ENCODE measurements at regions of chr6 and their contacts with region 1.

Region 1: GRCh38 chr6:90285611-90286381 is 10.8 kb downstream of the BACH2 start:
- DNase-seq: peak; percentile 87
- H3K4me3 Mint-ChIP-seq: peak overlapping the region; percentile 87
- H3K27ac Mint-ChIP-seq: peak overlapping the region; percentile 94
- H3K4me1 Mint-ChIP-seq: peaks cover 81% of the 10 kb centered on the region
- H3K27me3 Mint-ChIP-seq: no peaks in the 10 kb centered on the region

Region 2: DNA sequence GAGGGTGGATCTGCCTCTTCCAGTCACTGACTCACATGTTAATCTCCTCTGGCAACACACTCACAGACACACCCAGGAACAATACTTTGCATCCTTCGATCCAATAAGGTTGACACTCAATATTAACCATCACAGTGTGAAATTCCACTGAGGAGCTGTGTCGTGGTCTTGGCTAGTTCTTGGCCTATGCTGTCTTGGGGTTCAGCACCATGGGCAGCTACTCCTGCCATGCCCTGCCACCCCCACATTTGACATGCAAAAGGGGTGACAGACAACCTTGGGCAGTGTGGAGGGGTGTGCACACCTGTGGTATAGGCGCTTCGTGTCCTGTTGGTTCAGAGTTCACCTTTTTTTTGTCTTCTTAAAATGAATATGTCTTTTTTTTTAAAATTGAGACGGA is 827.1 kb before region 1 on chr6:
- intact Hi-C with region 1: no loop called
- DNase-seq: no peak
- H3K4me3 Mint-ChIP-seq: no peak overlapping the region
- H3K27ac Mint-ChIP-seq: no peak overlapping the region
- H3K4me1 Mint-ChIP-seq: no peaks in the 10 kb centered on the region
- H3K27me3 Mint-ChIP-seq: no peaks in the 10 kb centered on the region

Region 3: GRCh38 chr6:89940225-89941027 is 345.4 kb before region 1 on chr6:
- intact Hi-C with region 1: loop called (anchors 1 kb)
- DNase-seq: peak; percentile 91
- H3K4me3 Mint-ChIP-seq: no peak overlapping the region
- H3K27ac Mint-ChIP-seq: peak overlapping the region; percentile 41
- H3K4me1 Mint-ChIP-seq: peaks cover 34% of the 10 kb centered on the region
- H3K27me3 Mint-ChIP-seq: no peaks in the 10 kb centered on the region

Region 4: GRCh38 chr6:90144396-90144795 is 141.4 kb before region 1 on chr6:
- intact Hi-C with region 1: loop called (anchors 1 kb)
- DNase-seq: no peak
- H3K4me3 Mint-ChIP-seq: peak overlapping the region; percentile 59
- H3K27ac Mint-ChIP-seq: peak overlapping the region; percentile 92
- H3K4me1 Mint-ChIP-seq: peaks cover 54% of the 10 kb centered on the region
- H3K27me3 Mint-ChIP-seq: no peaks in the 10 kb centered on the region

Region 5: DNA sequence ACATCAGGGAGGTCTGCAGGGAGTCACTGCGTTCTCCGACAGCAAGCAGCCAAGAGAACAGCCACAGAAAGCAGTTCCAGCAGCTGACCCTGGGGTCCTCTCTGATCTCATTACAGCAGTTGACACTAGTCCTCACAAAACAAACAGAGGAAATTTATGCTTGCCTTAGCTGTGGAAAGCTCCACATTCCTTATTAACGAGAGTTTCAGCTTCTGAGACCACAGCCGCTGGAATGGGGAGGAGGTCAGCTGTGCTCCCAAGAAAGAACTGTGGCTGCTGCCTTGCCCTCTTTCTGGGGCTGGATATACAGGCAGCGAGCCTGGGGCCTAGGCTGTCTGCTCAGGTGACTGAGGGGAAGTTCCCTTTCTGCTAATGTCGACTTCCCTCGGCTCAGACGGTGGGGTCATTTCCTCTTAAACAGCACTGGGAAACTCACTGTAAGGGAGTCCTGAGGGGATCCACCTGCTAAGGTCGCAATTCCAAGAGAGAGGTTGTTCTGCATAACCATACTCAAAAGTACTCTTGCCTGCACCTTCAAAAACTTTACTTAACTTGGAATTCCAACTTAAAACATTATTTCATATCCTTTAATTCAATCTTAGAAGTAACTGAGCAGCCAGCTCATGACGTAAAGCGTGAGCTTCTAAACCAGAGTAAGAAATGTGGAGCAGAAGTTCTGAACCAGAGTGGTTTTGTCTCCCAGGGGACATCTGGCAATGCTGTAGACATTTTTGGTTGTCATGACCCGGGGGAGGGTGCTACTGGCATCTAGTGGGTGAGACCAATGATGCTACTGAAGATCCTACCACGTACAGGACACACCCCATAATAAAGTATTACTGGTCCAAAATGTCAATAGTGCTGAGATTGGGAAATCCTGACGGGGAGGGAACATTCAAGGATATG is 69.5 kb before region 1 on chr6:
- intact Hi-C with region 1: loop called (anchors 1 kb)
- DNase-seq: peak; percentile 79
- H3K4me3 Mint-ChIP-seq: peak overlapping the region; percentile 48
- H3K27ac Mint-ChIP-seq: no peak overlapping the region
- H3K4me1 Mint-ChIP-seq: peaks cover 40% of the 10 kb centered on the region
- H3K27me3 Mint-ChIP-seq: no peaks in the 10 kb centered on the region

Region 6: GRCh38 chr6:90274451-90275030 is 11.3 kb before region 1 on chr6:
- intact Hi-C with region 1: loop called (anchors 1 kb)
- DNase-seq: peak; percentile 94
- H3K4me3 Mint-ChIP-seq: peak overlapping the region; percentile 76
- H3K27ac Mint-ChIP-seq: peak overlapping the region; percentile 96
- H3K4me1 Mint-ChIP-seq: peaks cover 79% of the 10 kb centered on the region
- H3K27me3 Mint-ChIP-seq: no peaks in the 10 kb centered on the region

Region 7: GRCh38 chr6:90425161-90425641 is 139.4 kb after region 1 on chr6:
- intact Hi-C with region 1: loop called (anchors 1 kb)
- DNase-seq: peak; percentile 78
- H3K4me3 Mint-ChIP-seq: peak overlapping the region; percentile 69
- H3K27ac Mint-ChIP-seq: peak overlapping the region; percentile 91
- H3K4me1 Mint-ChIP-seq: peaks cover 24% of the 10 kb centered on the region
- H3K27me3 Mint-ChIP-seq: no peaks in the 10 kb centered on the region

Region 8: DNA sequence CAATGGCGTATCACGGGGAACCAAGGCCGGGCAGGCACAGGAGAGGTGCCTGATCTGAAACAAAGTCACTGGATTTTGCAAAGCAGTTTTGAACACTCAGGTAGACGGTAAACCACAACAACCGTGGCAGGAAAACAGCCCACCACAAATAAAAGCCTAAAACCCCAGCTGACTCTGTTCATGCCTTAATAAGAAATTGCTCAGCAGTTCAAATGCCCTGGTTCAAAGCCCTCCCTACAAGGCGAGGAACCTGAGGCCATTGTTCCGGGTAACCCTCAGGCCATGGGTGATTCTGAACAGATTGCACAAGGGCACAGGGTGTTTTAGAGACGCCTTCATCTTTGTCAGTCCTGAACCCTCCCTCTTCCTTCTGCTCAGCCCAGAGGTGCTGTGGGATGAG is 186.9 kb after region 1 on chr6:
- intact Hi-C with region 1: loop called (anchors 1 kb)
- DNase-seq: peak; percentile 85
- H3K4me3 Mint-ChIP-seq: peak overlapping the region; percentile 69
- H3K27ac Mint-ChIP-seq: peak overlapping the region; percentile 92
- H3K4me1 Mint-ChIP-seq: peaks cover 91% of the 10 kb centered on the region
- H3K27me3 Mint-ChIP-seq: no peaks in the 10 kb centered on the region